Activated CD4-positive, alpha-beta memory T cell treated with anti-CD3 and anti-CD28 coated beads for 36 hours (primary cell): ENCODE measurements at regions of chr1 and their contacts with region 1.

Region 1: DNA sequence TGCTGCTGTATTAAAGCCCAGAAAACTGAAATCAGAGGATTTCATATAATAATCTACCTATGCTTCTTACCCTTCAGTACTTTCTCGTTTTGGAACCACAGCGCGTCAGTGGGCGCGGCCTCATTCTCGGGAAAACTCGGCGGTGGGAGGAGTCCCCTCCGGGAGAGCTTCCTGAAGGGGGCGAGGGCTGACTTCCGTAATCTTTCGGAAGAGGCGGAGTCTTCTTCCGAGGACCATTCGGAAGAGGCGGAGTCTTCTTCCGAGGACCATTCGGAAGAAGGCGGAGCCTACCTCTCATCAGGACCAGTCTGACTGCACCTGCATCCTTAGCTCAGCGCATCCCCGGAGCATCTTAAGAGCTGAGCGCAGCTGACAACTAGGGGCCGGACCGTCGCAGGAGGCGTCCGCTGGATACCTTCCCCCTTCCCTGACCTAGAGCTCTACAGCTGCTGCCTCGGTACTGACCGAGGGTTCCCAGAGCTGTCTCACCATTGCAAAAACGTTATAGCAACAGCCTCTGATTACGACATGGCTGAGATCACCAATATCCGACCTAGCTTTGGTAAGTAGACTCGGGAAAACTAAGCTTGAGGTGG is at the start of gene SYT11:
- DNase-seq: peak; percentile 97
- H3K4me3 Mint-ChIP-seq: peak within 1 kb of the TSS; percentile 99
- H3K27ac Mint-ChIP-seq: peak within 1 kb of the TSS; percentile 93
- H3K4me1 Mint-ChIP-seq: peaks cover 45% of the 10 kb centered on the region
- H3K27me3 Mint-ChIP-seq: no peaks in the 10 kb centered on the region
- total RNA-seq, gene SYT11: 25.0 to 25.1 TPM

Region 2: DNA sequence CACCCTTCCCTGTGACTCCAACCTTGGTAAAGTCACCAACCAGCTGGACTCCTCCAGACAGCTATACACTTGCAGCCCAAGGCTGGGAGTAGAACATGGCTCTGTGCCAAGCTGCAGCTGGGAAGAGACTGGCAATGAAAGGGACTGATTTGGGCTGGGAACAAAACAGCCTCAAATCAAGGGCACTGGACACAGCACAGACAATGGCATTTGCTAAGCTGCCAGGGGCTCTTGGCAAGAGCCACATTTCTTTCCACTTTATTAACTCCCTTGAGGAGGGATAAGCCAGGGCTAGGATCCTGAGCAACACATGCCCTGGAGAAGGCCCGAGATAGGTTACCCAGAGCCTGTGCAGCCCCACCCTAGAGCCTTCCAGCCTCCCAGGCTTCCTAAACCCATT is 12.1 kb after region 1 on chr1:
- CTCF ChIA-PET with region 1: no interaction called
- POLR2A ChIA-PET with region 1: interaction called, 11 read pairs
- intact Hi-C with region 1: no loop called
- DNase-seq: no peak
- H3K4me3 Mint-ChIP-seq: no peak overlapping the region
- H3K27ac Mint-ChIP-seq: no peak overlapping the region
- H3K4me1 Mint-ChIP-seq: no peaks in the 10 kb centered on the region
- H3K27me3 Mint-ChIP-seq: no peaks in the 10 kb centered on the region

Region 3: DNA sequence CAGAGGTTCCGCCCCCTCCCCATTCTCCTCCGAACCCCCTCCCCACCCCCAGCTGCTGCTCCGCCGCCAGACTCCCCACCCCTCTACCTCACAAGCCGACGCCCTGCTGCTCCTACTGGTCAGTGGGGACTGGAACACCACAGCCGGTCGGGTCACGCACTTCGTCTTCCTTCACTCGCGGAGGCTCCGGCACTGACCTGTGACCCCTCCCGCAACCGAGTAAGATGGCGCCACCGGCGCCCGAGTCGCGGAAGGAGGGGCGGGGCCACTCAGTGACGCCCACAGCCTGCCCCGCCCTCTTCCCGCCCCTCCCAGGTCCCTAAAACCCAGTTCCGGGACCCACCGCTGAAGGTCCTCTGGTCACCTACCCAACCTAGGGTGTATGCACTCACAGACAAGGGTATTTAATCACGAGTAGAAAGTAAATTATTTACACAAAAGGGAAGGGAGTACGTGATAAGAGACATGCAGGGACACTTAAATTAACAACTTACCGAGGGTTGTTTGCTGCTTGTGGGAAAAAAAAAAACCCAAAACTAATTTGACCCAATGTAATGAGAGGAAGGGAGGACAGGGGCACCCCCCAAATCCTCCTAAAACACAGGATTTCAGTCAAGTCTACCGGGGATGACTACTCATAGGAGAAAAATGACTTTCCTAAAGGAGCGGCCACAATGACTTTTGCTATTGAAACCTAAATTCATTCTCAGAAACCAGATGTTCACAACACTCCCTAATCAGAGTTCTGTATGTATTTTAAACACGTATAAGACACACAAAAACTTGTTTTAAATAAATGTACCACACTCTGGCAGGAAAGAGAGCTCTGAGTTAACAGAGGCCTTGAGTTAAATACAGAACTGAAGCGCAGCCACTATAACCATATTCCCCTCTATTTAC is 52.1 kb after region 1 on chr1 and contains the start of gene RIT1:
- CTCF ChIA-PET with region 1: interaction called, 3 read pairs
- POLR2A ChIA-PET with region 1: interaction called, 4 read pairs
- intact Hi-C with region 1: loop called (anchors 1 kb)
- DNase-seq: peak; percentile 90
- H3K4me3 Mint-ChIP-seq: peak within 1 kb of the TSS; percentile 97
- H3K27ac Mint-ChIP-seq: peak within 1 kb of the TSS; percentile 96
- H3K4me1 Mint-ChIP-seq: peaks cover 22% of the 10 kb centered on the region
- H3K27me3 Mint-ChIP-seq: no peaks in the 10 kb centered on the region
- total RNA-seq, gene RIT1: 19.1 to 21.1 TPM

Region 4: DNA sequence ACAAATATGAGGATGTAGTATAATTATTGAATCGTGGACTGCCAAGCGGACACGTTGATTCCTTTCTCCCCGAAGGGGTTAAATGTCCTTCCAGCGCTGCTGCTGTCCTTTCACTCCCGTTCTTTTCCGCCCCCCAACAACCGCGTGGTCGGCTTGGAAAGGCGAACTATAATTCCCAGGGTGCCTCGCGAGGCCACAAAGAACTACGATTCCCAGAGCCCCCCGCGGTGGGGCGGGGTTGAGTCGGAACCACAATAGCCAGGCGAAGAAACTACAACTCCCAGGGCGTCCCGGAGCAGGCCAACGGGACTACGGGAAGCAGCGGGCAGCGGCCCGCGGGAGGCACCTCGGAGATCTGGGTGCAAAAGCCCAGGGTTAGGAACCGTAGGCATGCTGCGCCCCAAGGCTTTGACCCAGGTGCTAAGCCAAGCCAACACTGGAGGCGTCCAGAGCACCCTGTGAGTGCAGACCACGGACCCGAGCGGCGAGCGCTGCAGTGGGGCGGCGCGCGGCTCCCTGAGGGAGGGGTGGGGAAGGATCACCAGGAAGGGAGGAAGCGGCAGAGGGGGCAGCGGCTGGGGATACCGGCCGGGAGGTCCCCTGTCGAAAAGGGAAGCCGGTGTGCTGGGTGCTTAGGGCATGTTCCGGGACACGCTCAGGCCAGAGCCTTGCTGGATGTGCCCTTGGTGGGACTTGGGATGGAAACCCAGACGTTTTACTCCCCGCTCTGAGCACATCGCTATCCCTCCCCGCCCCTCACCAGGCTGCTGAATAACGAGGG is 195.4 kb after region 1 on chr1 and contains the start of gene LAMTOR2:
- CTCF ChIA-PET with region 1: interaction called, 6 read pairs
- POLR2A ChIA-PET with region 1: no interaction called
- intact Hi-C with region 1: loop called (anchors 1 kb)
- DNase-seq: peak; percentile 98
- H3K4me3 Mint-ChIP-seq: peak within 1 kb of the TSS; percentile 93
- H3K27ac Mint-ChIP-seq: peak within 1 kb of the TSS; percentile 96
- H3K4me1 Mint-ChIP-seq: peaks cover 27% of the 10 kb centered on the region
- H3K27me3 Mint-ChIP-seq: no peaks in the 10 kb centered on the region
- total RNA-seq, gene LAMTOR2: 61.4 to 65.1 TPM